Naive thymus-derived CD4-positive, alpha-beta T cell (primary cell): ENCODE measurements at regions of chr15 and their contacts with region 1.

Region 1: DNA sequence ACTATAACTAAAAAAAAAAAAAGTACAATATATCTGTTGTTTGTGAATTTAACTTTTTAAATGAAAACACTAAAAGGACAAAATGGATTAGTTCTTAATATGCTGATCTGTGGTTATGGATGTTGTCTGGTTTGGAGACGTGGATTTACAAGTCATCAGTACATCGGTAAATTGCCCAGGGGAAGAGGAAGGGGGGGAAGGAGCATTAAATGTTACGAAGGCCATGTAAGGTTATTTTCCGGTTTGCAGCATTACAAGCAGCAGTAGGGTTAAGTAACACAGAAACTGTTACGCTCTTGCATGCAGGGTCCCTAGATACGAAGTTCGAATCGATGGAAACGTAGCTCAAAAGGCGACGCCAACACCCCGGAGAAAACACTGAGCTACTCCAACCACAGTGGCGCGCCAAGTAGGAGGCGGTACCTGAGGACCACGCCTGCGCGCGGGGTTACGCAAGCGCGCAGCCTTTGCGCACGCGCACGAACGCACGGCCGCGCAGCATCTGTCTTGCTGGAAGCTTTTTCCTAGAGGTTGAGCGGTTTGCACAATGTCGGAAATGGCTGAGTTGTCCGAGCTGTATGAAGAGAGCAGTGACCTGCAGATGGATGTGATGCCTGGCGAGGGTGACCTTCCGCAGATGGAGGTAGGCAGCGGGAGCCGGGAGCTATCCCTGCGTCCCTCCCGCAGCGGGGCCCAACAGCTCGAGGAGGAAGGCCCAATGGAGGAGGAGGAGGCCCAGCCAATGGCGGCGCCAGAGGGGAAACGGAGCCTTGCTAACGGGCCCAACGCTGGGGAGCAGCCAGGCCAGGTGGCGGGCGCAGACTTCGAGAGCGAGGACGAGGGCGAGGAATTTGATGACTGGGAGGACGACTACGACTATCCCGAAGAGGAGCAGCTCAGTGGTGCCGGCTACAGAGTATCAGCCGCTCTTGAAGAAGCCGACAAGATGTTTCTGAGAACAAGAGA is at the start of gene EID1:
- DNase-seq: peak; percentile 87 to 94 (median 92)
- ATAC-seq: peak; percentile 95
- H3K4me3 ChIP-seq: peak within 1 kb of the TSS; percentile 75
- H3K4me3 Mint-ChIP-seq: peak within 1 kb of the TSS; percentile 93 to 100 (median 99)
- H3K27ac ChIP-seq: peak within 1 kb of the TSS; percentile 70
- H3K27ac Mint-ChIP-seq: peak within 1 kb of the TSS; percentile 95 to 99 (median 98)
- H3K4me1 ChIP-seq: peaks cover 4 to 17% of the 10 kb centered on the region in 2 donors
- H3K4me1 Mint-ChIP-seq: peaks cover 11 to 48% (median 26%) of the 10 kb centered on the region in 7 donors
- H3K27me3 ChIP-seq: no peaks in the 10 kb centered on the region
- H3K27me3 Mint-ChIP-seq: peaks cover 0 to 25% (median 15%) of the 10 kb centered on the region in 5 donors
- total RNA-seq, gene EID1: 40.3 to 96.0 (median 56.5) TPM

Region 2: GRCh38 chr15:48800245-48800644 is 77.7 kb before region 1 on chr15:
- CTCF ChIA-PET with region 1: no interaction called
- POLR2A ChIA-PET with region 1: no interaction called
- intact Hi-C with region 1: no loop called
- DNase-seq: no peak
- ATAC-seq: no peak
- H3K4me3 ChIP-seq: no peak overlapping the region
- H3K4me3 Mint-ChIP-seq: no peak overlapping the region
- H3K27ac ChIP-seq: no peak overlapping the region
- H3K27ac Mint-ChIP-seq: no peak overlapping the region
- H3K4me1 ChIP-seq: no peaks in the 10 kb centered on the region
- H3K4me1 Mint-ChIP-seq: peaks cover 4 to 50% (median 14%) of the 10 kb centered on the region in 7 donors
- H3K27me3 ChIP-seq: no peaks in the 10 kb centered on the region
- H3K27me3 Mint-ChIP-seq: no peaks in the 10 kb centered on the region

Region 3: GRCh38 chr15:48851956-48852355 is 26.0 kb before region 1 on chr15:
- CTCF ChIA-PET with region 1: no interaction called
- POLR2A ChIA-PET with region 1: no interaction called
- intact Hi-C with region 1: no loop called
- DNase-seq: no peak
- ATAC-seq: no peak
- H3K4me3 ChIP-seq: no peak overlapping the region
- H3K4me3 Mint-ChIP-seq: no peak overlapping the region
- H3K27ac ChIP-seq: no peak overlapping the region
- H3K27ac Mint-ChIP-seq: no peak overlapping the region
- H3K4me1 ChIP-seq: no peaks in the 10 kb centered on the region
- H3K4me1 Mint-ChIP-seq: peaks cover 0 to 2% (median 0%) of the 10 kb centered on the region in 7 donors
- H3K27me3 ChIP-seq: no peaks in the 10 kb centered on the region
- H3K27me3 Mint-ChIP-seq: peaks cover 12 to 26% (median 24%) of the 10 kb centered on the region in 5 donors

Region 4: GRCh38 chr15:48925714-48926223 is 47.9 kb after region 1 on chr15:
- CTCF ChIA-PET with region 1: no interaction called
- POLR2A ChIA-PET with region 1: interaction called, 4 read pairs
- intact Hi-C with region 1: loop called in 1 of 2 experiments (anchors 5 kb)
- DNase-seq: peak in 1 of 9 donors; percentile 40
- ATAC-seq: no peak
- H3K4me3 ChIP-seq: no peak overlapping the region
- H3K4me3 Mint-ChIP-seq: peak overlapping the region in 1 of 10 donors; percentile 11
- H3K27ac ChIP-seq: no peak overlapping the region
- H3K27ac Mint-ChIP-seq: peak overlapping the region in 1 of 9 donors; percentile 79
- H3K4me1 ChIP-seq: no peaks in the 10 kb centered on the region
- H3K4me1 Mint-ChIP-seq: peaks cover 0 to 42% (median 0%) of the 10 kb centered on the region in 7 donors
- H3K27me3 ChIP-seq: no peaks in the 10 kb centered on the region
- H3K27me3 Mint-ChIP-seq: peaks cover 0 to 42% (median 28%) of the 10 kb centered on the region in 5 donors

Region 5: GRCh38 chr15:49046220-49047102 is 168.5 kb after region 1 on chr15 and contains the start of gene SECISBP2L:
- CTCF ChIA-PET with region 1: no interaction called
- POLR2A ChIA-PET with region 1: interaction called, 4 read pairs
- intact Hi-C with region 1: loop called (anchors 1 kb)
- DNase-seq: peak; percentile 73 to 92 (median 91)
- ATAC-seq: peak; percentile 98
- H3K4me3 ChIP-seq: peak within 1 kb of the TSS; percentile 86
- H3K4me3 Mint-ChIP-seq: peak within 1 kb of the TSS; percentile 96 to 99 (median 98)
- H3K27ac ChIP-seq: peak within 1 kb of the TSS; percentile 82
- H3K27ac Mint-ChIP-seq: peak within 1 kb of the TSS; percentile 91 to 97 (median 93)
- H3K4me1 ChIP-seq: peaks cover 16 to 18% of the 10 kb centered on the region in 2 donors
- H3K4me1 Mint-ChIP-seq: peaks cover 23 to 41% (median 34%) of the 10 kb centered on the region in 7 donors
- H3K27me3 ChIP-seq: no peaks in the 10 kb centered on the region
- H3K27me3 Mint-ChIP-seq: no peaks in the 10 kb centered on the region
- total RNA-seq, gene SECISBP2L: 39.3 to 75.8 (median 55.8) TPM

Region 6: DNA sequence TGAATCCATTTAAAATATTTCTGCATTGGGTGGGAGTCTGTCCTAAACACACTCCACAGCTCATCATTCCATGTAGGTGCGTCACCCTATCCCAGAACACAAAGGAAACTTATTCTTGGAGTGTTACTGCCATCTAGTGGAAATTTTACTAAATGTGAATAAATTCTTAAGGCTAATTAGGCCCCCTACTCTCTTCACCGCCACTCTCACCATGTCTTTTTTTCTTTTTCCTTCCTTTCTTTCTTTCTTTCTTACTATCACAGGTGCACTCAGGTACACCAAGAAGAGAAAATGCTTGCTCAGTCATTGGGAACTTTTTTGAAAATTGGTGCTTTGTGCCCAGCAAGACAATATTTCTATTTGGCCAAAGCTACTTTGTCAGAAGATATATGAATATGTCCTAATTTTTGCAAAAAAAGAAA is 1267.5 kb after region 1 on chr15:
- CTCF ChIA-PET with region 1: no interaction called
- POLR2A ChIA-PET with region 1: no interaction called
- intact Hi-C with region 1: loop called in 1 of 2 experiments (anchors 5 kb)
- DNase-seq: peak in 6 of 9 donors; percentile 7 to 47 (median 36)
- ATAC-seq: peak; percentile 60
- H3K4me3 ChIP-seq: no peak overlapping the region
- H3K4me3 Mint-ChIP-seq: no peak overlapping the region
- H3K27ac ChIP-seq: no peak overlapping the region
- H3K27ac Mint-ChIP-seq: peak overlapping the region in 1 of 9 donors; percentile 66
- H3K4me1 ChIP-seq: no peaks in the 10 kb centered on the region
- H3K4me1 Mint-ChIP-seq: peaks cover 0 to 30% (median 0%) of the 10 kb centered on the region in 7 donors
- H3K27me3 ChIP-seq: no peaks in the 10 kb centered on the region
- H3K27me3 Mint-ChIP-seq: peaks cover 0 to 3% (median 0%) of the 10 kb centered on the region in 5 donors

Region 7: GRCh38 chr15:50686468-50687301 is 1808.8 kb after region 1 on chr15 and contains the start of gene TRPM7:
- CTCF ChIA-PET with region 1: no interaction called
- POLR2A ChIA-PET with region 1: no interaction called
- intact Hi-C with region 1: loop called in 1 of 2 experiments (anchors 2 kb)
- DNase-seq: peak; percentile 83 to 93 (median 90)
- ATAC-seq: peak; percentile 91
- H3K4me3 ChIP-seq: peak within 1 kb of the TSS; percentile 99
- H3K4me3 Mint-ChIP-seq: peak within 1 kb of the TSS; percentile 86 to 100 (median 97)
- H3K27ac ChIP-seq: peak within 1 kb of the TSS; percentile 93
- H3K27ac Mint-ChIP-seq: peak within 1 kb of the TSS; percentile 91 to 99 (median 97)
- H3K4me1 ChIP-seq: peaks cover 16 to 26% of the 10 kb centered on the region in 2 donors
- H3K4me1 Mint-ChIP-seq: peaks cover 42 to 62% (median 51%) of the 10 kb centered on the region in 7 donors
- H3K27me3 ChIP-seq: no peaks in the 10 kb centered on the region
- H3K27me3 Mint-ChIP-seq: no peaks in the 10 kb centered on the region
- total RNA-seq, gene TRPM7: 36.1 to 62.3 (median 45.2) TPM